GM18951 (cell line): ENCODE measurements at regions of chr21 and their contacts with region 1.

Region 1: DNA sequence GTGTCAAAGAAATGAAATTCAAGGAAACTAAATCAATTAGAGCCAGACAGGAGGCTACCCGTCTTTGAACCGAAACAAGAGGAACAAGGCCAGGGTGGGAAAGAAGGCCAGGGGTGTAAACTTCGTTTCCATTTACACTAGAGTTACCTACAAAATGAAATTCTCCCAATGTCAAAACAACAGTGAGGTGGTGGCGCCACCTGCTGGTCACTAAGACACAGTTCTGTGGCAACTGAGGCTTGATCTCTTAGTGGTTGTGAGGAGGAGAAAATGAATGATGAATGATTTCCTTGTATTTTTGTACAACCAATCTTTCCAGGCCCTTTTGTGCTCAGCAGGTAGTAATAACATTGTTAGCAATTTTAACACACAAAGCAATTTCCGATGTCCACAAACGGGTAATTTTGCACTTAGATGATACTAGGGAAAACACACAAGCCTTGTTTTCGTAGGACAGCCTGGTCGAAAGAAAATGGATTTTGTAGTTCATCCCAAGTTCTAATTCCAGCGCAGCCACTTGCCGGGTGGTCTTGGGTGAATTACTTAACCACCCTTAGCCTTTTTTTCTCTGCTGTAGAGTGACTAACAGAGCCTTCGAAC is 54.8 kb upstream of the SOD1 start:
- POLR2A ChIP-seq: no peak

Region 2: DNA sequence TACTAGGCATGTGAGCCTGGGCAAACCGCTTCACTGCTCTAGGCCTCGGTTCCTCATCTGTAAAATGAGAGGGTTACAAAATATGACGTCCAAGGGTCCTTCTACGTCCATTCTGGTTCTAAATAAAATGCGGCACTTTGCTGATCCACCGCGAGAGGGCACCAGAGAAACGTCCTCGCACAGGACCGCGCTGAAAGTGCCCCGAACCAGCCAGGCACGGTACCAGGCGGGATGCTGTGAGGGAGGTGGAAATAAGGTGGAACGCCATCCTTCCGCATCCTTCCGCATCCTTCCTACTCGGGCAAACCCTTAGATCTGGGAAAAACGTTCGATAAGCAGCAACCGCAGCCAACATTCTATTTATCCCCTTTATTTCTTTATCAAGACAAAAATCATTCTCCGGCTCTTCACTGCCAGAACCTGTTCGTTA is 506.1 kb before region 1 on chr21:
- in situ Hi-C with region 1: loop called (anchors 10 kb)
- POLR2A ChIP-seq: no peak